Endothelial cell of umbilical vein (primary cell): ENCODE measurements at regions of chr10 and their contacts with region 1.

Region 1: DNA sequence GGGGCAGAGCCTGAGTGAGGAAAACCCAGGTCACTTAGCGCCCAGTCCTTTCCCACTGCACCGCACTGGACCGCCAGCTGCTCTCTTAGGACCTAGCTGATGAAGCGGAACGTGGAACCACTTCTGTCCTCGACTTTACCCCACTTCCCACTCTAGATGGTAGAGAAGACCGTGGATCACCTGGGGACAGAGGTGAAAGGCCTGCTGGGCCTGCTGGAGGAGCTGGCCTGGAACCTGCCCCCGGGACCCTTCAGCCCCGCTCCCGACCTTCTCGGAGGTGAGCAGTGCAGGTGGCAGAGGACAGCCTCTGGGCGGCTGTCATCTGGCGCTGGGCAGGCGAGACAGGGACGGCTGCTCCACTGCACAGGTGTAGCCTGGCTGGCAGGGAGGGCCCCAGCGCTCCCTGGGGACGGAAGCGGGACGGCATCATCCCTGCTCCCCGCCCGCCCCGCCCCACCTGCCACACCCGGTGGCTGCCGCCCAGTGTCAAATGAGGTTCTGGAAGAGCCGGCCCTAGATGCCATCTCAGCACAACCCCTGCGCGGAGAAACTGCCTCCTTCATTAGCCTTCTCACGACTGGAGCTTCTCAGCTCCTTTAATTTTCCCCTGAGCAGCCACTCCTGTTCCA is 11.7 kb downstream of the PLAC9 start:
- DNase-seq: no peak
- H3K4me3 ChIP-seq: no peak overlapping the region
- H3K27ac ChIP-seq: no peak overlapping the region
- H3K4me1 ChIP-seq: peaks cover 8% of the 10 kb centered on the region
- H3K27me3 ChIP-seq: no peaks in the 10 kb centered on the region
- CTCF ChIP-seq: no peak
- POLR2A ChIP-seq: peak; percentile 25

Region 2: GRCh38 chr10:79910344-79910743 is 233.8 kb before region 1 on chr10:
- CTCF ChIA-PET with region 1: no interaction called
- POLR2A ChIA-PET with region 1: no interaction called
- dilution Hi-C with region 1: no loop called
- intact Hi-C with region 1: no loop called
- DNase-seq: no peak
- H3K4me3 ChIP-seq: no peak overlapping the region
- H3K27ac ChIP-seq: no peak overlapping the region
- H3K4me1 ChIP-seq: peaks cover under 1% of the 10 kb centered on the region
- H3K27me3 ChIP-seq: no peaks in the 10 kb centered on the region
- CTCF ChIP-seq: no peak
- POLR2A ChIP-seq: no peak

Region 3: GRCh38 chr10:79970062-79970461 is 174.1 kb before region 1 on chr10:
- CTCF ChIA-PET with region 1: no interaction called
- POLR2A ChIA-PET with region 1: no interaction called
- dilution Hi-C with region 1: no loop called
- intact Hi-C with region 1: no loop called
- DNase-seq: no peak
- H3K4me3 ChIP-seq: no peak overlapping the region
- H3K27ac ChIP-seq: no peak overlapping the region
- H3K4me1 ChIP-seq: no peaks in the 10 kb centered on the region
- H3K27me3 ChIP-seq: no peaks in the 10 kb centered on the region
- CTCF ChIP-seq: no peak
- POLR2A ChIP-seq: no peak

Region 4: DNA sequence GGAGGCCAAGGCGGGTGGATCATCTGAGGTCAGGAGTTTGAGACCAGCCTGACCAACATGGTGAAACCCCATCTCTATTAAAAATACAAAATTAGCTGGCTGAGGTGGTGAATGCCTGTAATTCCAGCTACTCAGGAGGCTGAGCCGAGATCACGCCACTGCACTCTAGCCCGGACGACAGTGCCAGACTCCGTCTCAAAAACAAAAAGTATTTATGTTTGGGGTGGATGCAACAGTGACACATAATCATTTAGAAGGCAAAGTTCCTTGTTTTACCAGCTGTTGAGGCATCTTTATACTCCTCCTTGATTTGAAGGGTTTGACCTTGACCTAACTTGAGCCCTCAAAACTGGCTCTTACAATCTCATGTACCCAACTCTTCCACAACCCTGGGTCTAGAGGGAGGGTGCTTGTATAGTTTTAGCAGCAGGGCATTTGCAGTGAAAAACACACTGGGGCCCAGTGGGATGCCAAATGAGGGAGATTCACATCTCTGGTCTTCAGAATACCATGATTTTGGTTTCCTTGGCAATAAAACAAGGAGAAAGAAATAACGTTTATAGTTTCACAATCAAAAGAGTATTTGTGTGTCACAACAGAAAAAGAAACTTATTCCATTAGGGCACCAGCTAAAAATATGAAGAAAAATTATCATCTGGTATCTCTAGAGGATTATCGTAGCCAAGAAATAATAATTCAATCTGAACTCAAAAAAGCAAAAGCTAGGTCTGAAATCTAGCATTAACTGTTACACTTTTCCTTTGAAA is 79.9 kb before region 1 on chr10:
- CTCF ChIA-PET with region 1: interaction called, 20 read pairs
- POLR2A ChIA-PET with region 1: no interaction called
- dilution Hi-C with region 1: no loop called
- intact Hi-C with region 1: no loop called
- DNase-seq: no peak
- H3K4me3 ChIP-seq: no peak overlapping the region
- H3K27ac ChIP-seq: no peak overlapping the region
- H3K4me1 ChIP-seq: no peaks in the 10 kb centered on the region
- H3K27me3 ChIP-seq: no peaks in the 10 kb centered on the region
- CTCF ChIP-seq: no peak
- POLR2A ChIP-seq: no peak

Region 5: DNA sequence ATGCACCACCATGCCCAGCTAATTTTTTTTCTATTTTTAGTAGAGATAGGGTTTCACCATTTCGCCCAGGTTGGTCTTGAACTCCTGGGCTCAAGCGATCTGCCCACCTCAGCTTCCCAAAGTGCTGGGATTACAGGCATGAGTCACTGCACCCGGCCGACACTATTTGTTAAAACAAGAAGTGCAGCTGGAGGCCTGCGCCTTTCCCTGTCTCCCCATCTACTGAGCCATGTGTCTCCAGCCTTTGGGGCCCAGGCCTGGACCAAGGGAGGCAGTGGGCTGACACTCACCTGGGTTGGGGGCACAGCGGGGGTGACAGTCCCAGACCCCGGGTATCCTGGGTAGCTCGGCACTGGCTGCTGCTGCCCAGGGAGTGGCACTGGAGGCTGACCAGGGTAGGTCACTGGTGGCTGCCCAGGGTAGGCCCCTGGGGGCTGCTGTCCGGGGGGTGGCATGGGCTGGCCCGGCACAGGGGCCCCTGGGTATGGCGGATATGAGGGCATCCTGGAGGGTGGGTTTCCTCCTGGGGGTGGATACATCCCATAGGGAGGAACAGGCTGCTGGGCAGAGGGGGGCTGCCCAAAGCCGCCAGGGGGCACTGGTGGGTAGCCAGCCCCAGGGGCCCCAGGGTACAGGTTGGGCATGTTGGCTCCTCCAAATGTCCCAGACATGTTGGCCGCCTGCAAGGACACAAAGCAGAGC is 24.6 kb after region 1 on chr10:
- CTCF ChIA-PET with region 1: interaction called, 11 read pairs
- POLR2A ChIA-PET with region 1: no interaction called
- dilution Hi-C with region 1: no loop called
- intact Hi-C with region 1: no loop called
- DNase-seq: no peak
- H3K4me3 ChIP-seq: no peak overlapping the region
- H3K27ac ChIP-seq: no peak overlapping the region
- H3K4me1 ChIP-seq: peaks cover 24% of the 10 kb centered on the region
- H3K27me3 ChIP-seq: no peaks in the 10 kb centered on the region
- CTCF ChIP-seq: peak; percentile 7 to 45
- POLR2A ChIP-seq: no peak

Region 6: GRCh38 chr10:80196270-80196949 is 52.2 kb after region 1 on chr10:
- CTCF ChIA-PET with region 1: interaction called, 20 read pairs
- POLR2A ChIA-PET with region 1: no interaction called
- dilution Hi-C with region 1: no loop called
- intact Hi-C with region 1: no loop called
- DNase-seq: peak; percentile 40
- H3K4me3 ChIP-seq: no peak overlapping the region
- H3K27ac ChIP-seq: peak overlapping the region; percentile 13
- H3K4me1 ChIP-seq: peaks cover 26% of the 10 kb centered on the region
- H3K27me3 ChIP-seq: no peaks in the 10 kb centered on the region
- CTCF ChIP-seq: no peak
- POLR2A ChIP-seq: no peak

Region 7: DNA sequence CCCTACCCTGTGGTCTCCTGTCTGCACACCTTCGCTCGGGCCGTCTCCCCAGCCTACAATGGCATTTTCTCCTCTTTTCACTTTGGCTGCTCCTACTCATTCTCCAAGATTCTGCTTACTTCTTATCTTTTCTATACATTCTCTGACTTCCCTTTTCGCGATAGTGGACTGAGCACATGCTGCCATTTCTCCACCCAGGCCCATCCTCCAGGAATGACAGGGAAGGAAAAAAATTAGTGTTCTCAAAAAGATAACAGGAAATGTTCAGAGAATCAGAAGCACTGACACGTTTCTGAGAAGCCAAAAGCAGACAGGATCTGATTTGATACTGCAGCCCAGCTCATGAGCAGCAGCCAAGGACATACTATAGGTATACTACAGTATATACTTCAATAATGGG is 67.6 kb after region 1 on chr10:
- CTCF ChIA-PET with region 1: interaction called, 320 read pairs
- POLR2A ChIA-PET with region 1: no interaction called
- dilution Hi-C with region 1: no loop called
- intact Hi-C with region 1: loop called (anchors 1 kb)
- DNase-seq: no peak
- H3K4me3 ChIP-seq: no peak overlapping the region
- H3K27ac ChIP-seq: no peak overlapping the region
- H3K4me1 ChIP-seq: peaks cover 6% of the 10 kb centered on the region
- H3K27me3 ChIP-seq: no peaks in the 10 kb centered on the region
- CTCF ChIP-seq: no peak
- POLR2A ChIP-seq: no peak

Region 8: DNA sequence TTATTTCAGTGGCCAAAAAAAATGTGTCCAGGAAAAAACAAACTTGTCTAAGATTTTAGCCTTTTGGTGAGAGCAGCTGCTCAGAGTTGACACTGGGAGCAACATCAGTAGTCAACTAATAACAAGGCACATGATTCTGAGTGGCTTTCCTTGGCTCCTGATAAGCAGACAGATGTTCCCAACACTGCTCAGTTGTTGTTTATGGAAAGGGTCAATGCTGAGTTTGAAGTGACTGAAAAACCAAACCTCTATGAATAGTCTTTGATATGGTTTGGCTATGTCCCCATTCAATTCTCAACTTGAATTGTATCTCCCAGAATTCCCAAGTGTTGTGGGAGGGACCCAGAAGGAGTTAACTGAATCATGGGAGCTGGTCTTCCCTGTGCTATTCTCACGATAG is 200.1 kb after region 1 on chr10:
- CTCF ChIA-PET with region 1: no interaction called
- POLR2A ChIA-PET with region 1: no interaction called
- dilution Hi-C with region 1: no loop called
- intact Hi-C with region 1: no loop called
- DNase-seq: no peak
- H3K4me3 ChIP-seq: no peak overlapping the region
- H3K27ac ChIP-seq: no peak overlapping the region
- H3K4me1 ChIP-seq: no peaks in the 10 kb centered on the region
- H3K27me3 ChIP-seq: peaks cover 0 to 2% of the 10 kb centered on the region in 2 experiments
- CTCF ChIP-seq: no peak
- POLR2A ChIP-seq: no peak